Activated B cell treated with CpG ODN at 0.5 μM for 24 hours (primary cell): ENCODE measurements at regions of chr17 and their contacts with region 1.

Region 1: DNA sequence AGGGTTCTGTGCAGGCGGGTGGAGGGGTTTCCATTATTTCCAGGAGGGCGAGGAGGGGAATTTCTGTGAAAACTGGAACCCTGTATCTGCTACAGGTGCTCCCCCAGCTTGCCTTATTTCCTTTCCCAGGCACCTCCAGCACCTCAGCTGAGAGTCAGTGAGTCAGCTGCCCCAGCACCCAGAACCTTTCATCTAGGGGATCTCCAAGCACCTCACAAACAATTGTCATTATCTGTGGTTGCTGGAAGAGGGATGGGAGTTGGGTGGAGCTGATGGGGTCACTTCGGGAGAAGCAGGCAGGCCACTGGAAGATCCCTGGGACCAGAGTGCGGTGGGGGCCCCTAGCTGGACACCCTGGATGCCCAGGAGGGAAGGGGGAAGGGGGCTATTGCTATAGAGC is 10.0 kb upstream of the CLUH start:
- DNase-seq: no peak
- ATAC-seq: no peak
- H3K4me3 Mint-ChIP-seq: no peak overlapping the region
- H3K27ac Mint-ChIP-seq: no peak overlapping the region
- H3K4me1 Mint-ChIP-seq: peaks cover 5% of the 10 kb centered on the region
- H3K27me3 Mint-ChIP-seq: peaks cover 22% of the 10 kb centered on the region
- CTCF ChIP-seq: no peak

Region 2: DNA sequence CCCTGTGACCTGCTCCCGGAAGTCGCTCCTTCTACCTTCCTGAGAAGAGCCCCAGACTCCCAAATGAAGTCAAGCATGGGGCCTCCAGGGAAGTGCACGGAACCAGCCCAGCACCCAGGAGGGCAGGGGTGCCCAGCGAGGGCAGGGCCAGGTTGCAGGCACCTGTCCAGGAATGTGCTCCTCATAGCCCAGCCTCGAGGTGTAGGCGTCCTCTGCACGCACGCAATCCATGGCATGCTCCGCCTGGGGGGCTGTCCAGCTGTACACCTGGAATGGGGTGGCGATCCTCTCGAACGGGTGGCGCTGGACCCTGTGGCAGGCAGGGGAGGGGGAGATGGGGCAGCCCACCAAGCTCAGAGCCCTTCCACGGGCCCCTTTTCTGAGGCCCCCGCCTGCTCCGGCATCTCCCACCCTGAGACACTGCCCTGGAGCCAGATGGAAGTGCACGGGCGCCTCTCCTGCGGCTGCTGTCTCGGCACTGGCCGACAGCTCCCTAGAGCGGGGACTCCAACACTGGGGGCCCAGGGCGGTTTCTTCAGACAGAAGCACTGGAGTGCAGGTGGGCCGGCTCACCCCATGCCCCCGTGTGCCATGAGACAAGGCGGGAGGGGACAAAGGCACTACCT is 21.0 kb before region 1 on chr17:
- CTCF ChIA-PET with region 1: no interaction called
- POLR2A ChIA-PET with region 1: no interaction called
- intact Hi-C with region 1: loop called (anchors 1 kb)
- DNase-seq: no peak
- ATAC-seq: no peak
- H3K4me3 Mint-ChIP-seq: no peak overlapping the region
- H3K27ac Mint-ChIP-seq: no peak overlapping the region
- H3K4me1 Mint-ChIP-seq: peaks cover 2% of the 10 kb centered on the region
- H3K27me3 Mint-ChIP-seq: no peaks in the 10 kb centered on the region
- CTCF ChIP-seq: no peak

Region 3: GRCh38 chr17:2786176-2786881 is 64.7 kb after region 1 on chr17:
- CTCF ChIA-PET with region 1: no interaction called
- POLR2A ChIA-PET with region 1: no interaction called
- intact Hi-C with region 1: no loop called
- DNase-seq: peak; percentile 88
- ATAC-seq: peak; percentile 98
- H3K4me3 Mint-ChIP-seq: no peak overlapping the region
- H3K27ac Mint-ChIP-seq: no peak overlapping the region
- H3K4me1 Mint-ChIP-seq: peaks cover 25% of the 10 kb centered on the region
- H3K27me3 Mint-ChIP-seq: no peaks in the 10 kb centered on the region
- CTCF ChIP-seq: peak; percentile 38

Region 4: GRCh38 chr17:2867441-2868424 is 146.1 kb after region 1 on chr17:
- CTCF ChIA-PET with region 1: no interaction called
- POLR2A ChIA-PET with region 1: no interaction called
- intact Hi-C with region 1: no loop called
- DNase-seq: no peak
- ATAC-seq: no peak
- H3K4me3 Mint-ChIP-seq: no peak overlapping the region
- H3K27ac Mint-ChIP-seq: no peak overlapping the region
- H3K4me1 Mint-ChIP-seq: no peaks in the 10 kb centered on the region
- H3K27me3 Mint-ChIP-seq: no peaks in the 10 kb centered on the region
- CTCF ChIP-seq: no peak